H1 (cell line): ENCODE measurements at regions of chr15 and their contacts with region 1.

Region 1: GRCh38 chr15:63487076-63487757 is 17.2 kb upstream of the USP3 start:
- DNase-seq: peak; percentile 49 to 99
- H3K4me3 ChIP-seq: no peak overlapping the region
- H3K27ac ChIP-seq: no peak overlapping the region
- H3K4me1 ChIP-seq: peaks cover 0 to 6% (median 3%) of the 10 kb centered on the region in 4 experiments; a peak in 4 of 7 replicates
- H3K27me3 ChIP-seq: peaks cover 0 to 11% (median 4%) of the 10 kb centered on the region in 4 experiments; a peak in 4 of 7 replicates
- CTCF ChIP-seq: peak; percentile 86 to 94 (median 94)
- EP300 ChIP-seq: no peak
- POLR2A ChIP-seq: no peak
- RAD21 ChIP-seq: peak; percentile 72 to 79

Region 2: DNA sequence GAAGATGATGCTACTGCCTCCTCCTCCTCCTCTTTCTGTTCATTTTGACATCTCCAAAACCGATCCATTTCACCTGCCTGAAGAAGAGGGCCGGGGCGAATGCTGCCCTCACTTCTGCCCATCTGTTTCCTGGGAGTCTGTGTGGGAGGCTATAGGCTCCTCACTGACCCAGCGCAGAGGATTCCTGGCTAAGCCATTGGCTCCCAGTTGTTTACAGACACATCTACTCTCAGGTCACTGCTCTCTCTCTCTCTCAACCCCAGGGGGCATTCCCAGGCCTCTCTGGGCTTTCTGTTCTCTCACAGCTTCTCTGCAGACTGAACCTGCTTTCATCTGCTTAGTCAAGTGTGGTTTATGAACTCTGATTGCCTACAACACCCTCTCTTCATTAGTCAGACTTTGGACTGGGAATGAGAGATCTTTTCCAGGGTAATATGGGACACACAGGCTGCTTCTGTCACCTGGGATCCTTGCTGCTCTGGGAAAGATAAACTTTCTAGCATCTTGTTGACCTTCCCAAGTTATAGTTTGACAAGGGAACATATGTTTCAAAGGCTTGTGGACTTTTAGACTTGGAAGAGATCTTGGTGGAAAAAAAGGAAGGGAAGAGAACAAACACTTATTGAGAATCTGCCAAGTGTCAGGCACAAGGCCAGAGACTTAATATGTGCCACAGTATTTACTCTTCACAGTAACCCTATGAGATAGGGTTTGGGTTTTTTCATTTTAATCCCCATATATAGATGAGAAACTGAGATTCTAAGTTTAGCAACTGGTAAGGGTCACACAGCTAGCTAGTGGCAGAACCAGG is 13.0 kb before region 1 on chr15:
- CTCF ChIA-PET with region 1: interaction called, 12 read pairs
- POLR2A ChIA-PET with region 1: interaction called, 4 read pairs
- DNase-seq: peak in 1 of 2 experiments; percentile 62
- H3K4me3 ChIP-seq: no peak overlapping the region
- H3K27ac ChIP-seq: no peak overlapping the region
- H3K4me1 ChIP-seq: no peaks in the 10 kb centered on the region; a peak in 3 of 7 replicates
- H3K27me3 ChIP-seq: no peaks in the 10 kb centered on the region
- CTCF ChIP-seq: no peak
- EP300 ChIP-seq: no peak
- POLR2A ChIP-seq: no peak
- RAD21 ChIP-seq: no peak

Region 3: GRCh38 chr15:63497642-63498467 is 10.6 kb after region 1 on chr15:
- CTCF ChIA-PET with region 1: interaction called, 20 read pairs
- POLR2A ChIA-PET with region 1: no interaction called
- DNase-seq: no peak
- H3K4me3 ChIP-seq: no peak overlapping the region
- H3K27ac ChIP-seq: no peak overlapping the region
- H3K4me1 ChIP-seq: peaks cover 3 to 24% (median 15%) of the 10 kb centered on the region in 4 experiments; a peak in 6 of 7 replicates
- H3K27me3 ChIP-seq: peaks cover 20 to 51% (median 38%) of the 10 kb centered on the region in 4 experiments
- CTCF ChIP-seq: no peak
- EP300 ChIP-seq: no peak
- POLR2A ChIP-seq: no peak
- RAD21 ChIP-seq: no peak